Common myeloid progenitor, CD34-positive (primary cell): ENCODE measurements at regions of chr12 and their contacts with region 1.

Region 1: GRCh38 chr12:111943929-111944328 is 69.0 kb downstream of the TMEM116 start:
- DNase-seq: no peak
- H3K4me3 ChIP-seq: no peak overlapping the region
- H3K27ac ChIP-seq: no peak overlapping the region
- H3K4me1 ChIP-seq: no peaks in the 10 kb centered on the region
- H3K27me3 ChIP-seq: no peaks in the 10 kb centered on the region

Region 2: DNA sequence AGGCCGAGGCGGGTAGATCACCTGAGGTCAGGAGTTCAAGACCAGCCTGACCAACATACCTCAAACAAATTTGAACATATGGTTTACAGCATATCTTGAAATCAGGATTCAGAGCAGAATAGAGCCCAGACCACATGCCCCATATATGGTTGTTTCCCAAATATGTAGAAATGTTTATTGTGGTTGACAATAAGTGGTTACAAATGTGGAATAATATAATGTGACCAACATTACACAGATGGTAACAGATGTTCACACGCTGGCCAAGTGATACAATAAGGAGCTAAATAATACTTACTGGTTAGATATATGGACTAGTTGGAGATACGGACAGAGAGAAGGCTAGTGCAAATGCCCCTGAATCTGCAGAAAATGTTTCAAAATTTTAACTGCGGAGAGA is 16.6 kb before region 1 on chr12:
- CTCF ChIA-PET with region 1: no interaction called
- POLR2A ChIA-PET with region 1: no interaction called
- DNase-seq: no peak
- H3K4me3 ChIP-seq: no peak overlapping the region
- H3K27ac ChIP-seq: no peak overlapping the region
- H3K4me1 ChIP-seq: no peaks in the 10 kb centered on the region
- H3K27me3 ChIP-seq: no peaks in the 10 kb centered on the region

Region 3: GRCh38 chr12:112012775-112013600 is 69.1 kb after region 1 on chr12 and contains the starts of genes ERP29 and TMEM116:
- CTCF ChIA-PET with region 1: interaction called, 15 read pairs
- POLR2A ChIA-PET with region 1: interaction called, 3 read pairs
- DNase-seq: peak; percentile 99
- H3K4me3 ChIP-seq: peak within 1 kb of the TSS; percentile 84 to 98 (median 92)
- H3K27ac ChIP-seq: peak within 1 kb of the TSS; percentile 70 to 92
- H3K4me1 ChIP-seq: peaks cover 0 to 27% (median 25%) of the 10 kb centered on the region in 4 experiments
- H3K27me3 ChIP-seq: no peaks in the 10 kb centered on the region

Region 4: GRCh38 chr12:112096667-112097066 is 152.7 kb after region 1 on chr12:
- CTCF ChIA-PET with region 1: no interaction called
- POLR2A ChIA-PET with region 1: no interaction called
- DNase-seq: no peak
- H3K4me3 ChIP-seq: no peak overlapping the region
- H3K27ac ChIP-seq: peak overlapping the region in 1 of 2 experiments; percentile 57
- H3K4me1 ChIP-seq: peaks cover 0 to 15% (median 5%) of the 10 kb centered on the region in 4 experiments
- H3K27me3 ChIP-seq: no peaks in the 10 kb centered on the region